Ascending aorta (tissue), 2 donors: ENCODE measurements at regions of chr3 and their contacts with region 1.

Region 1: GRCh38 chr3:72665701-72666443 is 182.4 kb downstream of the SHQ1 start:
- DNase-seq: no peak
- H3K4me3 ChIP-seq: no peak overlapping the region
- H3K27ac ChIP-seq: no peak overlapping the region
- H3K4me1 ChIP-seq: peaks cover 0 to 8% of the 10 kb centered on the region in 2 donors
- H3K27me3 ChIP-seq: no peaks in the 10 kb centered on the region
- CTCF ChIP-seq: peak; percentile 24 to 48 (median 36)

Region 2: DNA sequence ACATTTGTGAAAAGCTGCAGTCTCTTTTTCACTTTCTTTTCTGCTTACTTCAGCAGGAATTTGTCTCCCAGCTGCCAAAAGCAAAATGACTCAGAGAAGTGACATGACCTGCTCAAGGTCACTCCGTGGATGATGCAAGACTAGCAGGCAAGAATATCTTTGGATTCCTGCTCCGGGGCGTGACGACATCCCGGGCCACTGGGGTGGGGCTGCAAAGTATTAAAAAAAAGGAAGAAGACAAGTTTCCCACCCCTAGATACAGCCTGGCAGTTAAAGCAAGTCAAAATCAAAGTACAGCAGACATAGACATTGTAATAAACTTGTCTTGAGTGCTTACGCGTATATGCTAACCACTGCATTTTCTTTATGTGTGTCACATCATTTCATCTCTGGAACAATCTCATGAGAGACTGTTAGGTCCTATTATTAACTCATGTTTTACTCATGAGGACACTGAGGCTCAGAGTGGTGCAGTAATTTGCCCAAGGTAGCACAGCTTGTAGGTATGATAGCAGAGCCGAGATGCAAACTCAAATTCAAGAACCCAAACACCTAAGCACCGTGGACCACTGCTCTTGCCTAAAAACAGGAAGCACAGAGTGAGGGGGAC is 395.7 kb before region 1 on chr3:
- intact Hi-C with region 1: loop called (anchors 10 kb)
- DNase-seq: peak; percentile 78 to 95
- H3K4me3 ChIP-seq: no peak overlapping the region
- H3K27ac ChIP-seq: peak overlapping the region in 1 of 2 donors; percentile 10
- H3K4me1 ChIP-seq: peaks cover 0 to 24% of the 10 kb centered on the region in 2 donors
- H3K27me3 ChIP-seq: no peaks in the 10 kb centered on the region
- CTCF ChIP-seq: no peak

Region 3: DNA sequence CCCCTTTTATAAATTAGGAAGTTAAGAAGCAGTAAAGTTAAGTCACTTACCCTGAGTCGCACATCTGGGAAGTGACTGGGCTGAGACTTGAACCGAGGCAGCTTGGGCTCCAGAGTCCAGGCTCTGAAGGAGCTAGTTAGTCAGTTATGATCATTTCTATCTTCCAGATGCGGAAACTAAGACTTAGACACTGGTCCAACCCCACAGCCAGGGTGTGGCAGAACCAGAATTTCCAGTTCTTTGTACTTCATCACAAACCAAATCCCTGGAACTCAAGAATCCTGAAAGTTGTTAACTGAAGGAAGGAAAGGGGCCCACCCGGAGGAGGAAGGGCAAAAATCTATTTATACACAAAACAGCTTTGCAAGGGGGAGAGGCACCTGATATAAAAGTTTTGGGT is 207.5 kb before region 1 on chr3:
- intact Hi-C with region 1: no loop called
- DNase-seq: no peak
- H3K4me3 ChIP-seq: no peak overlapping the region
- H3K27ac ChIP-seq: no peak overlapping the region
- H3K4me1 ChIP-seq: no peaks in the 10 kb centered on the region
- H3K27me3 ChIP-seq: no peaks in the 10 kb centered on the region
- CTCF ChIP-seq: no peak

Region 4: GRCh38 chr3:72482589-72483321 is 183.1 kb before region 1 on chr3:
- intact Hi-C with region 1: loop called (anchors 5 kb)
- DNase-seq: peak; percentile 56 to 93
- H3K4me3 ChIP-seq: peak overlapping the region; percentile 34 to 56
- H3K27ac ChIP-seq: peak overlapping the region; percentile 62 to 83
- H3K4me1 ChIP-seq: peaks cover 5 to 16% of the 10 kb centered on the region in 2 donors
- H3K27me3 ChIP-seq: no peaks in the 10 kb centered on the region
- CTCF ChIP-seq: no peak

Region 5: GRCh38 chr3:72872183-72872582 is 206.3 kb after region 1 on chr3:
- intact Hi-C with region 1: no loop called
- DNase-seq: no peak
- H3K4me3 ChIP-seq: no peak overlapping the region
- H3K27ac ChIP-seq: no peak overlapping the region
- H3K4me1 ChIP-seq: no peaks in the 10 kb centered on the region
- H3K27me3 ChIP-seq: no peaks in the 10 kb centered on the region
- CTCF ChIP-seq: no peak

Region 6: DNA sequence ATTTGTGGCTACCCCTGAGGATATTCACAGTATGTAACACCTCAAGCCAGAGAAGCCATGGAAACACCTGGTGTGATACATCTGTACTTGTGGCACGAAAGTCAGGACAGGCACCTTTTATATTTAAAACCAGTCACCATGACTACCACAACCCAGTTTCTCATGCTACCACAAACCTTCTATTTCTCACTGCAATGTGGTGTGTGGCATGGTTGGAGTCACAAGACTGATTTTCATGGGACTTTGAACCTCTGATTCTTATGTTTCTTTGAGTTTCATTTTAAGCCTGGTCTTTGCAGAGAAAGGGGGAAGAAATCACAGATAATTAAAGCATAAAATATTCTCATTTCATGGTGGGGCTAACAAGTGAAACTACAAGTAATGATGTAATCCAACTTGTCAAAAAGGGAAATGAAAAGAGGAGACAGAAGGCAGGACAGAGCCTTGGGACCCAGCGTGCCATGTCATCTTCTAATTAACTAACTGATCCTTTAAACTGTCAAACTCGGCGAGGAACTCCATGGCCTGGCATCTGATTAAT is 783.0 kb after region 1 on chr3:
- intact Hi-C with region 1: no loop called
- DNase-seq: no peak
- H3K4me3 ChIP-seq: no peak overlapping the region
- H3K27ac ChIP-seq: no peak overlapping the region
- H3K4me1 ChIP-seq: peaks cover under 1 to 30% of the 10 kb centered on the region in 2 donors
- H3K27me3 ChIP-seq: no peaks in the 10 kb centered on the region
- CTCF ChIP-seq: no peak